Mammary epithelial cell (primary cell): ENCODE measurements at regions of chr14 and their contacts with region 1.

Region 1: GRCh38 chr14:23727566-23728335 is 91.6 kb downstream of the DHRS2 start:
- DNase-seq: peak; percentile 43
- H3K4me3 ChIP-seq: no peak overlapping the region
- H3K27ac ChIP-seq: no peak overlapping the region
- H3K4me1 ChIP-seq: peaks cover 8% of the 10 kb centered on the region
- H3K27me3 ChIP-seq: peaks cover 2% of the 10 kb centered on the region
- CTCF ChIP-seq: peak; percentile 37 to 40

Region 2: GRCh38 chr14:23588884-23589598 is 138.7 kb before region 1 on chr14:
- CTCF ChIA-PET with region 1: no interaction called
- dilution Hi-C with region 1: no loop called
- in situ Hi-C with region 1: no loop called
- intact Hi-C with region 1: loop called (anchors 2 kb)
- DNase-seq: peak; percentile 72
- H3K4me3 ChIP-seq: no peak overlapping the region
- H3K27ac ChIP-seq: no peak overlapping the region
- H3K4me1 ChIP-seq: no peaks in the 10 kb centered on the region
- H3K27me3 ChIP-seq: no peaks in the 10 kb centered on the region
- CTCF ChIP-seq: peak; percentile 68 to 88

Region 3: DNA sequence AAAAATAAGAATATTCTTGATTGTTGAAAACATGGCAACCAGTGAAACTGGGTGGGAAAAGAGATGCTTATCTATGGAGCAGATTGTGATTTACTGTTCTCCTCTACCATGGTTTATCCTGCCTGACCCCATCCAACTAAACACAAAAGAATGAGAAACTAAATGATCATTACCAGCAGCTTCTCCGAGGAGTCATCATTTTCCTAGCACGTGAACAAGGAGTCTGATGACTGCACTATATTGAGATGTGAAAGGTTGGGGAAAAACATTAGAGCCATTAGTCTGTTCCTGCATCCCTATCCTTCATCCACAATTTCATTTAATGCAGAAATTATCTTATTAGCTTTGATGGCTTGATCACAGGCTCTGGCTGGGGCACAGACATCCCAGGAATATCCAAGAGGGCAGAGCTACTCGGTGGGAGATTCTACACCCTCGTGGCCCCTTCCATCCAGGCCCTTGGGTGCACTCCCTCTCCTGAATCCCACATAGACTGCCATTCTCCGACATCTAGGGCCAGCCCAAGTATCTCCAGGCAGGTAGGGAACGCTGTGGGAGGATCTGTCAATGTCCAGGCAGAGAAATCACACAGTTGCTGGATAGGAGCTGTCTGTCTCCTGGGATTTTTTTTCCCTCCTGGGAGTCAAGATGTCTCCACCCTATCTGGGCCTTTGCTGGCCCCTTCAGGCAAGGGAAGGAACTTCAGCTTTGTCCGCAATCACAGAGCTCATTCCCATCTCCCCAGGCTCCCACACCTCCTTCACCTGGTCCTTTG is 182.5 kb after region 1 on chr14:
- CTCF ChIA-PET with region 1: interaction called, 4 read pairs
- dilution Hi-C with region 1: no loop called
- in situ Hi-C with region 1: loop called in 1 of 2 experiments (anchors 25 kb)
- intact Hi-C with region 1: loop called (anchors 1 kb)
- DNase-seq: peak; percentile 53
- H3K4me3 ChIP-seq: no peak overlapping the region
- H3K27ac ChIP-seq: no peak overlapping the region
- H3K4me1 ChIP-seq: no peaks in the 10 kb centered on the region
- H3K27me3 ChIP-seq: no peaks in the 10 kb centered on the region
- CTCF ChIP-seq: peak; percentile 90 to 92

Region 4: DNA sequence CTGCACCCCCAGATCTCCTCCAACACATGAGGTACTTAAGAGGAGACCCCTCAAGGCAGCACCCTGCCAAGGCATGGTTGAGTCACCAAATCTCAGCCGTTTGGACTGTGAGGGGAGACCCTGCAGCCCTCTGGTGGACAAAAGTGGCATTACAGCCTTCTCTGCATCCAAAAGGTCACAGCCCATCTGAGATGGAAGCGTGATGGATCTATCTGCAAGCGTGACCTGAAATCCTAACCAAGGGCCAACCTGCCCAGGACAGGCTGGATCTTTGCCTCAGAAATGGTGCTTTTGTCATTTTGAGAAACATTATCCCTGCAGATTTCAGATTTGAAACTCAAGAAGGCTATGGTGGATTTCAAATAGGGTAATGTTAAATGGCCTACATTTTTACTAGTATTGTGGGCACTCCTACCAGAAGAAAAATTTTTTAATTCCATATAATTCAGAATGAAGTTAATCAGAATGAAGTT is 202.1 kb after region 1 on chr14:
- CTCF ChIA-PET with region 1: no interaction called
- dilution Hi-C with region 1: no loop called
- in situ Hi-C with region 1: no loop called
- intact Hi-C with region 1: loop called (anchors 1 kb)
- DNase-seq: peak; percentile 39
- H3K4me3 ChIP-seq: no peak overlapping the region
- H3K27ac ChIP-seq: no peak overlapping the region
- H3K4me1 ChIP-seq: peaks cover 3% of the 10 kb centered on the region
- H3K27me3 ChIP-seq: no peaks in the 10 kb centered on the region
- CTCF ChIP-seq: peak; percentile 92 to 93

Region 5: DNA sequence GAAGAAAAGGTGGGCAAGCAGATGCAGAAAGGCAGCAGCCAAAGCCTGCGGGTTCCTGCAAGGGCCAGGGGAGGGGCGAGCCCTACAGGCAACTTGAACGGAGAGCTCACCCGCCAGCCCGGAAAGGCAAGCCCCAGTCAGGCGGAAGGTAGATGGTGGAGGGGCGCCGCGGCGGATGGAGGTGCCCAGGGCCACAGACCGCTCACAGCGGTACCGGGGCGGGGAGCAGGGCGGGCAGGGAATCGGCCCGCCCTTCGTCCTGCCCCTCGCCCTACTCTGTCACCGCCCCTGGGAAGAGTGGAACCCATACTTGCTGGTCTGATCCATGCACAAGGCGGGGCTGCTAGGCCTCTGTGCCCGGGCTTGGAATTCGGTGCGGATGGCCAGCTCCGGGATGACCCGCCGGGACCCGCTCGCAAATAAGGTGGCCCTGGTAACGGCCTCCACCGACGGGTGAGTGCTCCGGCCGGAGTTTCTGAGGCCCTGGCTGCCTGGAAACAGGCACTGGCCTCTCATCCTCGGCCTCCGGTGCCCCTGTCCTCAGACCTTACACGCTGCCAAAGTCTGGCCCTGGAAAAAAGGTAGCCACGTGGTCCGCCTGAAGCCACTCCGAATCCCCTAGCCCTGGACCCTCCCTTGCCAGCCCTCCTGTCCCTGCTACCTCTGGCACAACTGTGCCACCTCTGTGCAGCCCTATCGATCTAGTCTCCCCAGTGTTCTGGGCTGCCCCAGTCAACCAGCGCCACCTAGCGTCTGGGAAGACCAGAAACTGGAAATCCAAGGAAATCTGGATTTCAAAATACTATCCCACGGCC is 225.9 kb after region 1 on chr14 and contains the start of gene DHRS4:
- CTCF ChIA-PET with region 1: no interaction called
- dilution Hi-C with region 1: no loop called
- in situ Hi-C with region 1: no loop called
- intact Hi-C with region 1: loop called (anchors 1 kb)
- DNase-seq: peak; percentile 86
- H3K4me3 ChIP-seq: peak within 1 kb of the TSS; percentile 54 to 82 (median 68)
- H3K27ac ChIP-seq: peak within 1 kb of the TSS; percentile 52
- H3K4me1 ChIP-seq: no peaks in the 10 kb centered on the region
- H3K27me3 ChIP-seq: no peaks in the 10 kb centered on the region
- CTCF ChIP-seq: peak; percentile 75 to 93
- total RNA-seq, gene DHRS4: 25.0 to 30.9 TPM

Region 6: GRCh38 chr14:24067145-24068082 is 339.7 kb after region 1 on chr14:
- CTCF ChIA-PET with region 1: no interaction called
- dilution Hi-C with region 1: no loop called
- in situ Hi-C with region 1: no loop called
- intact Hi-C with region 1: no loop called
- DNase-seq: no peak
- H3K4me3 ChIP-seq: no peak overlapping the region
- H3K27ac ChIP-seq: no peak overlapping the region
- H3K4me1 ChIP-seq: no peaks in the 10 kb centered on the region
- H3K27me3 ChIP-seq: peaks cover 4% of the 10 kb centered on the region
- CTCF ChIP-seq: no peak